Posterior vena cava (tissue), 2 donors: ENCODE measurements at regions of chr6 and their contacts with region 1.

Region 1: GRCh38 chr6:79373246-79373645 is 138.8 kb upstream of the HMGN3 start:
- DNase-seq: no peak

Region 2: DNA sequence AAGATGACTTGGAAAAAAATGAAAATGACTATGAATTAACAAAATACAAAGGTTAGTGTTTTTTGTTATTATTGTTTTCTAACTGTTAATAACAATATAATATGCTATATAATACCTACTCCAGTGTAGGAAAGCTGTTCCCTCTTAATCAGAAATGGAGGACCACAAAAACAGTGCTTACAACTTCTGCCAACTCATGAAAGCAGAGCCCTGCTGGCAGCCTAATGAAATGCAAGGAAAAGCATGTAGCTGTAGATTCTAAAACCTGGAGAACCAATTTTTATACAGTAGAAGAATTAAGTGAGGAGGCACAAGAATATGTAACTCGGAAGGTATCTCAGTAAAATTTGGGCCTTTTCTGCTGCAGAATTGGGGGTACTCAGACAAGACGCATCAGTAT is 324.6 kb before region 1 on chr6:
- intact Hi-C with region 1: no loop called
- DNase-seq: no peak

Region 3: DNA sequence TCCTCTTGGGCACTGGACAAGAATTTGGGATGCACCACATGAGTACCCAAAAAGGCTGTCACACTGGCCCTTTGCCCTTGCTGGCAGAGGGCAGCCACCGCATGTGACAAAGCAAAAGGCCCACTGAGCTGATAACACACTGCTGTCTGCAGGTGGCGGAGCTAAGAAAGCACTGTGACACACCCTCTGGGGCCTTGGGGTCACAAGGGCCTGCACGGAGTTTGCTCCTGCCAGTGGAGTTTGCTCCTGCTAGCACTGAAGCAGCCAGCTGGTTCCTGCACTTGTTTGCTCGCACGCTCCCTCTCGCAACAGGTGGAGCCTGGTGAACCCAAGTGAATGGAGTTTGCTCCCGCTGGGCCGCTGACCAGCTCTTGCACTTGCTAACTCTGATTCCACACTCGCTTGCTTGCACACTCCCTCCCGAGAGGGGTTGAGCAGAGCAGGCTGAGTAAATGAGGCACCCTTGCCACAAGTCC is 31.5 kb after region 1 on chr6:
- intact Hi-C with region 1: loop called in 1 of 2 experiments (anchors 1 kb)
- DNase-seq: no peak